Activated CD4-positive, alpha-beta T cell treated with anti-CD3 and anti-CD28 coated beads, Interleukin-2, amount 10 ng/mL, durations not matched to agents 24 days and 14 days (primary cell): ENCODE measurements at regions of chr22 and their contacts with region 1.

Region 1: GRCh38 chr22:49936018-49936952 is 17.9 kb downstream of the CRELD2 start:
- DNase-seq: peak; percentile 97
- H3K4me3 Mint-ChIP-seq: peak overlapping the region; percentile 66
- H3K27ac Mint-ChIP-seq: peak overlapping the region; percentile 91
- H3K4me1 Mint-ChIP-seq: peaks cover 23% of the 10 kb centered on the region
- H3K27me3 Mint-ChIP-seq: no peaks in the 10 kb centered on the region

Region 2: GRCh38 chr22:49960159-49961004 is 24.1 kb after region 1 on chr22 and contains the start of gene PIM3:
- intact Hi-C with region 1: loop called (anchors 1 kb)
- DNase-seq: peak; percentile 98
- H3K4me3 Mint-ChIP-seq: peak within 1 kb of the TSS; percentile 94
- H3K27ac Mint-ChIP-seq: peak within 1 kb of the TSS; percentile 95
- H3K4me1 Mint-ChIP-seq: peaks cover 17% of the 10 kb centered on the region
- H3K27me3 Mint-ChIP-seq: no peaks in the 10 kb centered on the region
- total RNA-seq, gene PIM3: 302 and 304 TPM in 2 replicates

Region 3: DNA sequence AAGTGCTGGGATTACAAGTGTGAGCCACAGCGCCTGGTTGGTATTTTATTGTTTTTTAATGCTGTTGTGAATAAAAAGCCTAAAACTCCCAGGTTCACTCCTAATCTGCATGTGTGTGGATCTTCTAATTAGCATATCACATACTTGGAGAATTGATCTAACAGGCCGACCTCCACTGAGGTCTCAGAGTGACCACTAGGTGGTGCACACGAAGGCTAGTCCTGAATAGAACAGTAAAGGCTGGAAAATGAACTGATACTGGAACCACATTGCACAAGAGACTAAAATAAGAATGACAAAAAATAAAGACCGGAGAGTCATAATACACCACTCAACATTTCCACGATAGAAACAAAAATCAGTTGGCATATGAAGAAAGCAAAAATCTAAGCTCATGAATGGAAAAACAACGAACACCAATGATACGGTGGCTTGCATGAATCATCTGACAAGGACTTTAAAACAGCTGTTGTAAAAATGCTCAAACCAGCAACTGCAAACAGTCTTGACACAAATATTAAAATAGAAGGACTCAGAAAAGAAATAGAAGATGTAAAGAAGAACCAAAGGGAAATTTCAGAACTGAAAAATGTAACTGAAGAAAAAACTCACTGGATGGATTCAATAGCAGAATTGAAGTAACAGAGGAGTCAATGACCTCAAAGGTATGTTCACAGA is 43.4 kb after region 1 on chr22:
- intact Hi-C with region 1: loop called (anchors 2 kb)
- DNase-seq: peak; percentile 69
- H3K4me3 Mint-ChIP-seq: peak overlapping the region; percentile 11
- H3K27ac Mint-ChIP-seq: peak overlapping the region; percentile 73
- H3K4me1 Mint-ChIP-seq: peaks cover 29% of the 10 kb centered on the region
- H3K27me3 Mint-ChIP-seq: peaks cover 8% of the 10 kb centered on the region

Region 4: GRCh38 chr22:50185384-50186087 is 249.3 kb after region 1 on chr22 and contains the start of gene TRABD:
- intact Hi-C with region 1: loop called (anchors 5 kb)
- DNase-seq: peak; percentile 96
- H3K4me3 Mint-ChIP-seq: peak within 1 kb of the TSS; percentile 96
- H3K27ac Mint-ChIP-seq: peak within 1 kb of the TSS; percentile 92
- H3K4me1 Mint-ChIP-seq: peaks cover 19% of the 10 kb centered on the region
- H3K27me3 Mint-ChIP-seq: peaks cover 2% of the 10 kb centered on the region
- total RNA-seq, gene TRABD: 94.4 and 97.4 TPM in 2 replicates